K562 (cell line): ENCODE measurements at regions of chr16 and their contacts with region 1.

Region 1: GRCh38 chr16:47728205-47728604 is 267.1 kb downstream of the PHKB start:
- DNase-seq: no peak
- ATAC-seq: no peak
- H3K4me3 ChIP-seq: no peak overlapping the region
- H3K27ac ChIP-seq: no peak overlapping the region
- H3K4me1 ChIP-seq: no peaks in the 10 kb centered on the region
- H3K27me3 ChIP-seq: peaks cover 25 to 36% of the 10 kb centered on the region in 2 experiments; a peak in 4 of 5 replicates
- CTCF ChIP-seq: no peak
- EP300 ChIP-seq: no peak
- POLR2A ChIP-seq: no peak
- RAD21 ChIP-seq: no peak

Region 2: GRCh38 chr16:47779201-47780016 is 51.2 kb after region 1 on chr16:
- CTCF ChIA-PET with region 1: no interaction called
- POLR2A ChIA-PET with region 1: no interaction called
- in situ Hi-C with region 1: no loop called
- intact Hi-C with region 1: loop called (anchors 10 kb)
- DNase-seq: peak in 3 of 4 experiments; percentile 10 to 65 (median 52)
- ATAC-seq: peak; percentile 75
- H3K4me3 ChIP-seq: peak overlapping the region; percentile 25
- H3K27ac ChIP-seq: peak overlapping the region; percentile 21; the same call in 2 of the 3 replicates
- H3K4me1 ChIP-seq: peaks cover 0 to 7% of the 10 kb centered on the region in 2 experiments; a peak in 2 of 5 replicates
- H3K27me3 ChIP-seq: peaks cover 0 to 4% of the 10 kb centered on the region in 2 experiments; a peak in 1 of 5 replicates
- CTCF ChIP-seq: no peak
- EP300 ChIP-seq: no peak
- POLR2A ChIP-seq: no peak
- RAD21 ChIP-seq: no peak